GM10248 (cell line): ENCODE measurements at regions of chr11 and their contacts with region 1.

Region 1: GRCh38 chr11:111671383-111671782 is 69.1 kb downstream of the SIK2 start:
- DNase-seq: no peak
- CTCF ChIP-seq: no peak

Region 2: GRCh38 chr11:111659201-111660115 is 11.9 kb before region 1 on chr11:
- CTCF ChIA-PET with region 1: interaction called, 18 read pairs
- POLR2A ChIA-PET with region 1: no interaction called
- DNase-seq: no peak
- CTCF ChIP-seq: no peak